ENCODE measurements at regions of chr19 and their contacts with region 1.

Region 1: DNA sequence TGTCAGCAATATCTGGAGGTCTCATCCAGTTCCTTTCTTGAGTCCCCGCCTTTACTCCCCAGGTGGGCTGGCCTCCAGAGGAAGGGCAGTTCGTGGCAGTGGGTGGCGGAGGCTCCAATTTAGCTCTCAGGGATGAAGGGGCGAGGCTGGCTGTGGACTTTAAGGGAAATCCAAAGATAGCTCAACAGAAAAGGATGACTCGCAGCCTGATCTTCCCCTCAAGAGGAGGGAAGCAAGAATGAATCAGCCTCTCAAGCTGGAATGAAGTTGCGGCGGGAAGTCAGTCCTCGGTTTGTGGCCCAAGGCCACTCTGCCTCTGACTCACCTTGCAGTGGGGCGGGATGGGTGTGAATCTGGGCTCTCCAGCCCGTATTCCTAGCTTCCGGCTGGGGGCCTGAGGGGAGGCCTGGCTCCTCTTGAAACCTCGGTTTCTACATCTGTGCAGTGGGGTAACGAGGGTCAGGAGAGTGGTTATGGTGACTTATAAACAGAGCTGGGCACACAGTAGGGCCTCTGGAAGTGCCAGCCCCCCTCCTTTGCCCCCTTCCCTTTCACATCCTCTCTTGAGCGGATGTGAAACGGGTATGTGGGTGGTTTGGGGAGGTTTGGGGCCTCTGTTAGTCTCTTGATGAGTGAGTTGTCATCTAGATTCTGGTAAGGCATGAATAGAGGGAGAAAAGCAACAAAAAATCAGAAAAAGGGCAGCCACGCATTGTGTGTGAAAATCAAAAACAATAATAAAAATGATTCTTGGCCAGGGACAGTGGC is 10.5 kb upstream of the SMG9 start:
- DNase-seq: peak; percentile 30
- ATAC-seq: peak; percentile 50; the same call in 1 of the 3 replicates
- H3K4me3 ChIP-seq: no peak overlapping the region
- H3K27ac ChIP-seq: no peak overlapping the region
- H3K4me1 ChIP-seq: peaks cover 16% of the 10 kb centered on the region; the same call in 1 of the 2 replicates
- H3K27me3 ChIP-seq: no peaks in the 10 kb centered on the region
- CTCF ChIP-seq: no peak
- EP300 ChIP-seq: no peak
- POLR2A ChIP-seq: no peak
- RAD21 ChIP-seq: no peak

Region 2: DNA sequence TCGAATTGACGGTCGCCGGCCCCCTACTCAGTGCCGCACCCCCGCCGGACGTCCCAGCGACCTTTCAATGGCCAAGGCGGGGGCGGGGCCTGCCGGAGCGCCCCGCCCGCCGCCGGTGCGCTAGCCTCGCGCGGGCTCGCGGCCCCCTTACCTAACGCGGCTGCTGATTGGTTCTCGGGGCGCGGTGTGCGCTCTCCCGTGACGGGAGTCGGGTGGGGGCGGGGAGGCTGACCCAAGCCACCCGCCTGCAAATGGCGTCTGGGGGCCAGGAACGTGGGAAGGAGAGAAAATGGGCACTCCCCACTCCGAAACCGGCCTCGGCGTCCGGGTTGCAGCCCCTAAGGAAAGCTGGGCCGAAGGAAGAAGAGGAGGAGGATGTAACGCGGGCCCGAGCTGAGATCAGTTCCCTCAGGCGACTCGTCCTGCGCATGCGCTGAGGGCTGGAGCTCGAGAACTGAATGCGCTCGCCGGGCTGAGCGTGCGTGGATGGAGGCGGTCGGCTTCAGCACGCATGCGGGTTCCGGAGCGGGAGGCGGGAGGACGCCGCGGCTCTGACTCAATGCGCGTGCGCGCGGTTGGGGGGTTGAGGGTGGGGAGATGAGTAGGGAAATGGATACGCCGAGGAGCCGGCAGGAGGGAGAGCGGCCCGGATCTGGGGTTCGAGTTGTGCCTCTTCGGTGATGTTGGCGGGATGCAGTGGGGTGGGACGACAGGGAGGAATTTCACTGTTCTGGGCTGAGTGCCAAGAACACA is 10.6 kb before region 1 on chr19 and contains the start of gene SMG9:
- CTCF ChIA-PET with region 1: no interaction called
- POLR2A ChIA-PET with region 1: interaction called, 20 read pairs
- in situ Hi-C with region 1: no loop called
- intact Hi-C with region 1: no loop called
- DNase-seq: peak; percentile 94
- ATAC-seq: peak; percentile 95
- H3K4me3 ChIP-seq: peak within 1 kb of the TSS; percentile 66 to 83 (median 67)
- H3K27ac ChIP-seq: peak within 1 kb of the TSS; percentile 93
- H3K4me1 ChIP-seq: peaks cover 26% of the 10 kb centered on the region
- H3K27me3 ChIP-seq: no peaks in the 10 kb centered on the region
- CTCF ChIP-seq: no peak
- EP300 ChIP-seq: no peak
- POLR2A ChIP-seq: peak; percentile 90 to 94
- RAD21 ChIP-seq: no peak
- total RNA-seq, gene SMG9: 9.6 and 18.7 TPM in 2 replicates

Measured in HepG2 (cell line).